Heart left ventricle (tissue), 16 donors: ENCODE measurements at regions of chr6 and their contacts with region 1.

Region 1: DNA sequence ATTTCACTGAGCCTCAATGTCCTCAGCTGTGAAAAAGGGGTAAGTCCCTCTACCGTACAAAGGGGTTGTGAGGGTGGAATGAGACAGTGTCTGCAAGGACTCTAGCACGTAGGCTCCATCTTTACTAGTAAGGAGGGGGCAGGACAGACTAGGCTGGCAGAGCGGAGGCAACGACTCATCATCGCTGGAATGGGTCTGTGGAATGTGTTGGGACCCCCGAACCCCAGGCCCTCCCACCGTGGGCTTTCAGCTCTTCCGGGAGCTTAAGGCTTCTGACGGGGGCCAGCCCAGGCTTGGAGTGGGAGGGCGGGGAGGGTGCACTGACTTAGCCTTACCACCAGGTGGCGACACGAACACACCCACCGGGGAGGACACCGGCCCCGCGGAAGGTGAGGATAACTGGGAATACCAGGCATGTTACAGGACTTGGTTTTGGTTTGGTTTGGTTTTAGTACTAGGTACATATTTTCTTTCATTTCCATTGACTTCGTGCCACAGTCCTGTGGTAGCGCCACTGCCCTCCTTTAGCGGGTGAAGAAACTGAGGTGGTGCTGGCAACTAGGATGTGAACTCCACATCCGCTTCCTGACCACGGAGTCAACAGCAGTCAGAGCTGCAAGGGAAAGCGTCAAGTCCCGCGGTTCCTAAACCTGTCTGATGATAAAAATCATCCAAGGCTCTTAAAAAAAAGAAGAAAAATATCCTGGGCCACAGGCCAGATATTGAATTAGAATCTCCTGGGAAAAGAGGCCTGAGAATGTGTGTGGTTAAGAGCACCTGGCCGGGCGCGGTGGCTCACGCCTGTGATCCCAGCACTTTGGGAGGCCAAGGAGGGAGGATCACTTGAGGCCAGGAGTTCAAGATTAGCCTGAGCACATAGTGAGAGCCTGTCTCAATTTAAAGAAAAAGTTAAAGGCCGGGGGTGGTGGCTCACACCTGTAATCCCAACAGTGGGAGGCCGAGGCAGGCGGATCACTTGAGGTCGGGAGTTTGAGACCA is 10.3 kb upstream of the TULP1 start:
- DNase-seq: peak; percentile 54 to 84 (median 73)
- ATAC-seq: peak; percentile 73 to 95 (median 92)
- H3K4me3 ChIP-seq: peak overlapping the region in 9 of 12 donors; percentile 10 to 45 (median 28)
- H3K27ac ChIP-seq: no peak overlapping the region
- H3K4me1 ChIP-seq: peaks cover 0 to 12% (median 0%) of the 10 kb centered on the region in 12 donors
- H3K27me3 ChIP-seq: peaks cover 0 to 3% (median 0%) of the 10 kb centered on the region in 9 donors
- CTCF ChIP-seq: peak; percentile 92 to 100 (median 97)
- POLR2A ChIP-seq: no peak

Region 2: GRCh38 chr6:35552285-35552917 is 29.4 kb after region 1 on chr6:
- intact Hi-C with region 1: no loop called
- DNase-seq: no peak
- ATAC-seq: no peak
- H3K4me3 ChIP-seq: no peak overlapping the region
- H3K27ac ChIP-seq: no peak overlapping the region
- H3K4me1 ChIP-seq: no peaks in the 10 kb centered on the region
- H3K27me3 ChIP-seq: peaks cover 0 to 5% (median 0%) of the 10 kb centered on the region in 9 donors
- CTCF ChIP-seq: peak; percentile 22 to 89 (median 45)
- POLR2A ChIP-seq: no peak

Region 3: DNA sequence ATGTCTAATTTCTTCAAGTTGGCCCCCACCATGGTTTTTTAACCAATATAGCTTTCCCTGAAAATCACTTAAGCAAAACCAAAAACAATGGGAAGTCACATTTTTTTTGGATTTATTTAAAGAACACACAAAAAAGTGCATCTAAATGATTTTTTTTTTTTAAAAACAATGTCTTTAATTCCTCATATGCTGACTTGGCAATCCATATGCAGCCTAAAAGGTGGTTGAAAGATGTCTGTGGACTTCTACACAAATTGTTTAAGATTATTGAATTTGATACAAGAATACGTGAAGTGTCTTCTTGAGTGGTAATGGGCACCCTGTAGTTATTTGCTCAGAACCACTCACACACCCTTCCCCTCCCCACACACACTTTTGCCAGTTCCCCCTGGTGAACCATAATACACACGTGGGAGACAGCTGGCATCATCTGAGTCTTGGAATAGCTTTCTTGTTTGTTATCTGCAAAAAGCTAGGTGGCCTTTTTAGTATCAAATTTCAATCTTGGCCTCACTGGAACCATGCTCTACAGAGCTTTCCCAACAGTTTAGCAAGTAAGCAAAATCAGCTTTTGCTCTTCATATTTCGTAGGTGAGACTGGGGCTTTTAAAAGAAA is 50.6 kb after region 1 on chr6:
- intact Hi-C with region 1: loop called in 3 of 10 experiments (anchors 5 to 10 kb)
- DNase-seq: no peak
- ATAC-seq: no peak
- H3K4me3 ChIP-seq: no peak overlapping the region
- H3K27ac ChIP-seq: no peak overlapping the region
- H3K4me1 ChIP-seq: no peaks in the 10 kb centered on the region
- H3K27me3 ChIP-seq: no peaks in the 10 kb centered on the region
- CTCF ChIP-seq: no peak
- POLR2A ChIP-seq: no peak

Region 4: GRCh38 chr6:35737413-35738211 is 214.7 kb after region 1 on chr6:
- intact Hi-C with region 1: loop called (anchors 1 to 5 kb)
- DNase-seq: no peak
- ATAC-seq: peak; percentile 47 to 86 (median 78)
- H3K4me3 ChIP-seq: no peak overlapping the region
- H3K27ac ChIP-seq: peak overlapping the region in 1 of 12 donors; percentile 45
- H3K4me1 ChIP-seq: peaks cover 4 to 46% (median 13%) of the 10 kb centered on the region in 12 donors
- H3K27me3 ChIP-seq: no peaks in the 10 kb centered on the region
- CTCF ChIP-seq: peak; percentile 74 to 92 (median 87)
- POLR2A ChIP-seq: no peak

Region 5: GRCh38 chr6:35757456-35758123 is 234.6 kb after region 1 on chr6:
- intact Hi-C with region 1: loop called in 1 of 10 experiments (anchors 5 kb)
- DNase-seq: no peak
- ATAC-seq: peak in 1 of 4 donors; percentile 18
- H3K4me3 ChIP-seq: no peak overlapping the region
- H3K27ac ChIP-seq: no peak overlapping the region
- H3K4me1 ChIP-seq: no peaks in the 10 kb centered on the region
- H3K27me3 ChIP-seq: peaks cover 0 to 39% (median 12%) of the 10 kb centered on the region in 9 donors
- CTCF ChIP-seq: peak in 5 of 12 donors; percentile 7 to 43 (median 33)
- POLR2A ChIP-seq: no peak